Posterior vena cava (tissue), 2 donors: ENCODE measurements at regions of chr9 and their contacts with region 1.

Region 1: DNA sequence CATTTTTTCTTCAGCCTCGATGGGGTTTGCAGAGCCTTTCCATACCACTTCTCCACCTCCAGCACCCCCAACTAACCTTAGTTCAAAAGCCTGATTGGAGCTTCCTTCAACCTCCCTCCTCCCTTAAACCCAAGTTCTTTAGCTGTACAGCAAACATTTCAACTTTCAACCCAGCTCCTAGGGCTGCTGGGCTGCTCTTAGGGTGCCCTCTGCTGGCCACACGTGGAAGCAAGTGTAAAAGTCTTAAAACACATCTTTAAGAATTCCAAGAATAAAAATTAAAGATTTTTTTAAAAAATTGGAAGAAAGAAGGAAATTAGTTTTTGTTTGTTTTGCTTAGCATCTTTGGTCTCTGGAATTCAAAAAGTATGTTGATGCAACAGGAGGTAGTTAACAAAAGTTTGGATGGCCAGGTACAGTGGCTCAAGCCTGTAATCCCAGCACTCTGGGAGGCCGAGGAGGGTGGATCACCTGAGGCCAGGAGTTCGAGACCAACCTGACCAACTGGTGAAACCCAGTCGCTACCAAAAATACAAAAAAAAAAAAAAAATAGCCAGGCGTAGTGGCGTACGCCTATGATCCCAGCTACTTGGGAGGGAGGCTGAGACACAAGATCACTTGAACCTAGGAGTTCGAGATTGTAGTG is 15.5 kb upstream of the HSD17B3 start:
- DNase-seq: no peak

Region 2: DNA sequence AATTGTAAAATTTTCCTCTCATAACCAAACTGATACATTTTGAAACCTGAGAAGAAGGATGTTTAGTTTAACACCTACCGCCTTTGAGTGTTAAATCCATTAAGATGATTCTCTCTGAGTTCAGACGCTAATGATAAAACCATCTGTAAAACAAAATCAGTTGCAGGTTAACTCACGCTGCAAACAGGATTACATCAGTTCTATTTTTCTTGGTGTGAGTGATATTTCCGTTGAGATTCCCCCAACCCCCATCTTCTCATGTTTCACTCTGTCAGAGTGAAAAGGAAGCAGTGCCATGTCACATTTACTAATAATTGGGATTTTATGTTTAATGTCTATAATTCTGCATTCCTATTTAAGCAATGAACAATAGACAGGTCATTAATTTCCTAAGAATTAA is 1146.5 kb before region 1 on chr9:
- intact Hi-C with region 1: no loop called
- DNase-seq: no peak

Region 3: DNA sequence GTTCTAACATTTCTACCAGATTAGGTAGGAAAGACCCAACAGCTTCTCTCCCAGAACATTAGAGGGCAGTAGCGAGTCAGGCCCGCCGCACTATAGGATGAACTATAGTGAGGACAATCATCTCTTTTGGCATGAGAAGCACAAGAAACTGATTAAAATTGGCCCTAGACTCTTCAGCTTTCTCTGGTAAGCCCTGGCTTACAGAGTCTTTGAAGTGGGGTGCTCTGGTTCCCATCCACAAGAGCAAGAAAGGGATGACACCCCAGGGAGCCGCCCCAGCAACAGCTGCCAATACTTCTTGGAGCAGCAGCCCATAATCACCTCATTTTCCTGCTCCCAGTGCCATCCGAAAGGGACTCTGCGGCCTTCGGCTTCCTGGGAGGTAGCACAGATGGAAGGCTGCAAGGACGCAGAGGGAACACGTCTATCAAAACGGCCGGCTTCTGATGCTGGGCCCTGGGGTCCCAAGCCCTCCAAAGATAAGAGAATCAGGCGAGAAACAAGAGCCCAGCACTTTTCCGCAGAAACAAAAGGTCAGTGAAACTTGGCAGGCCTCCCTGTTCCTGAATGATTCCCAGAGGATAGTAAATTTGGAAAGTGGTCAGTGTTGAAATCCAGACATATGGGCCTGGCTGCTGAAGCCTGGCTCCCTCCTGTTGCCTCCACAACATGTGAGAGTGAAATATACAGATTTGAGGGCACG is 84.8 kb before region 1 on chr9:
- intact Hi-C with region 1: loop called (anchors 10 kb)
- DNase-seq: no peak

Region 4: DNA sequence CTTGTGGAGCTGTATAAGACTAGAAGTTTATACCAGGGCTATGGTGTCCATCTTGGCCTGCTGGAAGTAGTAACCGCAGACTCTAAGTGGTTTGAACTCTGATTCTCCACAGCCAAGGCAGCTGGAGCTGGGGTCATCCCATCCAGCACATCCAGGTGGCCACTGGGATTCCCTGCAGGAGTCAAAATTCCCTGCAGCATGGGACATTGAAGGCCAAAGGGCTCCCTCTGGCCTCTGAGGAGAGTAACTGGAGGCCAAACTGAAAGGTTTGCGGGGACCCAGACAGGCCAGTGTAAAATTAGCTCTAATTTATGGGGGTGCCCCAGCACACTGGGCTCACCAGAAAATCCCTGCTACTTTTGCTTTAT is 349.9 kb after region 1 on chr9:
- intact Hi-C with region 1: loop called in 1 of 2 experiments (anchors 5 kb)
- DNase-seq: no peak